Posterior cingulate gyrus (tissue), 11 donors: ENCODE measurements at regions of chr9 and their contacts with region 1.

Region 1: GRCh38 chr9:32550562-32551433 is 1.3 kb upstream of the SMIM27 start:
- DNase-seq: peak; percentile 91 to 99 (median 94)

Region 2: DNA sequence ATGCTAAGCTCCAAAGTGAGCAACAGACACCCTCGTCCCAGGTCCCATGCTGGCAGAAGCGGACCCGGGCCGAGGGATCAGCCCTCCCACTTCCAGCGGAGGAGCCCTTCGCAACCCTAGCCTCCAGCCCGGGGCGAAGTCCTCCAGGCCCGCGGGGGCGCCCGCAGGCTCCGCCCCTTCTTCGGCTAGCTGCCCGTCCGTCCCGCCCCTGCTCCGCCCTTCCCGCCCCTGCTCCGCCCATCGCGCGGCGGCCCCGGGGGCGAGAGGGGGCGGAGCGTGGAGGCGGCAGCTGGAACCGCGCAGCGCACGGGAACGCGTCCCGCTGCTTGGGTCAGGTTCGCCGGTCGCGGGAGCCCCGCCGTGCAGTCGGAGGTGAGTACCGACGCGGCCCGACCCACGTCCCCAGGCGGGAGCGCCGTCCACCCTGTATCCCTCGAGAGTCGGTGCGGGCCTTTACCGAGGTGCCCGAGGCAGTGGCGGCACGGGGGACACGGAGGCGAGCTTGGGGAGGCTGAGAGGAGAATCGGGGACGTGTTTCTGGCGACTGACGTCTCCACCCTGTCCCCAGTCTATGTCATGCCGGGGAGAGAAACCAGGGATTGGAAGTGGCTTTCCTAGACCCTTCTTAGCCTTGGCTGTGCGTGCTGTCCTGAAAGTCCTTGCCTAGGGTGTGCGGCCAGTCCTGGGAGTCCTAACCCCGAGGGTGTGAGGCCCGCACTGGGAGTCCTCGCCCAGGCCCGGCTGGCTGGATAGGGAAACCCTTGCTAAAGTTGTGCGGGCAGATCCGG is 166.2 kb before region 1 on chr9 and contains the start of gene ACO1:
- intact Hi-C with region 1: loop called (anchors 10 kb)
- DNase-seq: peak; percentile 68 to 97 (median 82)

Region 3: GRCh38 chr9:32526041-32526706 is 24.6 kb before region 1 on chr9 and contains the start of gene RIGI:
- intact Hi-C with region 1: loop called (anchors 2 kb)
- DNase-seq: peak; percentile 74 to 97 (median 86)

Region 4: GRCh38 chr9:32571969-32572899 is 21.4 kb after region 1 on chr9:
- intact Hi-C with region 1: loop called (anchors 1 kb)
- DNase-seq: peak in 8 of 10 donors; percentile 43 to 89 (median 66)